ENCODE measurements at regions of chr9 and their contacts with region 1.

Region 1: DNA sequence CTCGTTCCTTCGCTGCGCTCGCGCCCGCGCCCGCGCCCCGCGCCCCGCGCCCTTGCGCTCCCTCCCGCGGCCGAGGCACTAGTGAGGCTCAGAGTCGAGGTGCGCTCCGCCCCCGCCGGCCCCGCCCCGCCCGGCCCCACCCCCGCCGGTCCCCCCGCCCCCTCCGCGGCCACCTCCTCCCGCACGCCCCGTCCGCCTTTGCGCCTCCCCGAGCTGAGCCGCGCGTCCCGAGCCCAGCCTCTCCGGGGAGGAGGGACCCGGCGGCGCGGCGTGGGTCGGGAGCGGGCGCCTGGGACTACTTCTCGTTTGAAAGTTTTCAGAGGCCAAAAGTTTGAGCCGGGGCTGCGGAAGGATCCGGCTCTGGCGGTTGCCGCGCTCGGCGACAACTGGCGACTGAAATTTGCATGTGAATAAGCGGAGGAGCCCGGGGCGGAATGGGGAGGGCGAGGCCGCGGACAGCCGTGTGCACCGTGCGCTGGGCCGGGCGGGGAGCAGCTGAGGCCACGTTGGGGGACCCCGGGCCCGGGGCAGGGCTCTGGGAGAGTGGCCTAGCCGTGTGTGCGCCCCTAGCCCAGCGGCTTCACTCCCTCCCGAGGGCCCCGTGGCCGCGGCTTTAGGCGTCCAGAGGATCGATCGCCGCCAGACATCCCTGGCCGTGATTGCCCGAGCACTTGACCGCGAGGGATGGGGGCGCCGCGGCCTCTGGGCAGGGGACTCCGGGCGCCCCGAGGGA is at the start of gene NOTCH1:
- DNase-seq: peak; percentile 83 to 87 (median 84)
- H3K4me3 ChIP-seq: peak within 1 kb of the TSS; percentile 71
- H3K27ac ChIP-seq: peak within 1 kb of the TSS; percentile 85 to 89
- H3K4me1 ChIP-seq: peaks cover 18% of the 10 kb centered on the region
- H3K27me3 ChIP-seq: no peaks in the 10 kb centered on the region
- CTCF ChIP-seq: no peak
- EP300 ChIP-seq: no peak
- POLR2A ChIP-seq: peak; percentile 26
- total RNA-seq, gene NOTCH1: 7.3 to 30.9 (median 17.4) TPM

Region 2: DNA sequence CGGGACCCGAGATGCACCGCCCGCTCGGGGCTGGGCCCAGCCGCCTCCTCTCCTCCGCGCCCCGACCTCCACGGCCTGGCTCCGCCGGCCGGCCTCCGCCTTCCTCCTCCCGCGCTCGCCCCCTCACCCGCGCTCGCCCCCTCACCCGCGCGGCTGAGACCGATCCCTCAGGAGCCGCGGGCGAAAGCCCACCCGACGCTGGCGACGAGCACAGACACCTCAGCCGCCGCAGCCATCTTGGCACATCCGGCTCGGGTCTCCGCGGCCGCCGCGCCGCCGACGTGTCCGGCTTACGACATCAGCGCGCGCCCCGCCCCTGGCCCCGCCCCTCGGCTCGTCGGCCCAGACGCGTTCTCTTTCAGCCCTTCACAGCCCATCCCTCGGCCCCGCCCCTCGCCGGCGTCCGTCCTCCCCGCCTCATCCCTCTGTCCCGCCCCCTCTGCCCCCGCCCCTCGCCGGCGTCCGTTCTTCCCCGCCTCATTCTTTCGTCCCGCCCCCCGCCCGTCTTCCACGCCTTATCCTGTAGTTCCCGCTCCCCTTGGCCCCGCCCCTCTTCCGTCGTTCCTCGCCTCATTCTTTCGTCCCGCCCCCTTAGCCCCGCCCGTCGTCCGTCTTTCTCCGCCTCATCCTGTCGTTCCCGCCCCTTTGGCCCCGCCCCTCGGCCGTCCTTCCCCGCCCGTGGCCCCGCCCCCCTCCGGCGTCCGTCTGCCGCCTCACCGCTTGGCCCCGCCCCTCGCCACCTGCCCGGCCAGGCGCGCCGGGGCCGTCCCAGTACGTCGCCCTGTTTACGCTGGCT is 63.1 kb before region 1 on chr9 and contains the start of gene SEC16A:
- intact Hi-C with region 1: loop called in 1 of 4 experiments (anchors 10 kb)
- DNase-seq: peak; percentile 100
- H3K4me3 ChIP-seq: peak within 1 kb of the TSS; percentile 92
- H3K27ac ChIP-seq: peak within 1 kb of the TSS; percentile 86 to 100
- H3K4me1 ChIP-seq: peaks cover 10% of the 10 kb centered on the region
- H3K27me3 ChIP-seq: no peaks in the 10 kb centered on the region
- CTCF ChIP-seq: no peak
- EP300 ChIP-seq: no peak
- POLR2A ChIP-seq: peak; percentile 96
- total RNA-seq, gene SEC16A: 30.0 to 61.4 (median 50.2) TPM

Region 3: DNA sequence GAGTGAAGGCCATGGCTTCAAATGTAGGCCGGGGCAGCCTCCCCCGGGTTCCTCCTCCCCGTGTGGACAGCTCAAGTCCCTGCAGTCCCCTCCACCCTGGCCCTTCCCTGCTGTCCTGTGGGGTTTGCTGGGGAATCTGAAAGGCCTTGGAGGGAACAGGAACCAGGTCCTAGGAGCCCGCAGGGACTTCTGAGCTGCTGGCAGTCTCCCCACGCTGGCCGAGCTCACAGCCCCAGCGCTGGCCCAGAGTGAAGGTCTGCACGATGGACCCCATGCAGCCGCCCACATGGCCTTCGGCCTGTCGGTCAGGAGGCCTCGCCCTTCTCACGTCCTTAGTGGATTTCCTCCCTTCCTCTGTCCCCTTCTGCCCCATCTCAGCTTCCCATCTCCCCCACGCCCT is 25.4 kb after region 1 on chr9:
- intact Hi-C with region 1: loop called in 1 of 4 experiments (anchors 2 kb)
- DNase-seq: peak in 1 of 5 donors; percentile 15
- H3K4me3 ChIP-seq: no peak overlapping the region
- H3K27ac ChIP-seq: no peak overlapping the region
- H3K4me1 ChIP-seq: peaks cover 14% of the 10 kb centered on the region
- H3K27me3 ChIP-seq: no peaks in the 10 kb centered on the region
- CTCF ChIP-seq: no peak
- EP300 ChIP-seq: no peak
- POLR2A ChIP-seq: no peak

Measured in ovary (tissue), 10 donors.